ENCODE measurements at regions of chr5 and their contacts with region 1.

Region 1: GRCh38 chr5:76771705-76772405 is 47.0 kb upstream of the F2RL1 start:
- DNase-seq: no peak
- H3K4me3 Mint-ChIP-seq: no peak overlapping the region
- H3K27ac Mint-ChIP-seq: no peak overlapping the region
- H3K4me1 Mint-ChIP-seq: peaks cover 4% of the 10 kb centered on the region
- H3K27me3 Mint-ChIP-seq: peaks cover 9% of the 10 kb centered on the region

Region 2: DNA sequence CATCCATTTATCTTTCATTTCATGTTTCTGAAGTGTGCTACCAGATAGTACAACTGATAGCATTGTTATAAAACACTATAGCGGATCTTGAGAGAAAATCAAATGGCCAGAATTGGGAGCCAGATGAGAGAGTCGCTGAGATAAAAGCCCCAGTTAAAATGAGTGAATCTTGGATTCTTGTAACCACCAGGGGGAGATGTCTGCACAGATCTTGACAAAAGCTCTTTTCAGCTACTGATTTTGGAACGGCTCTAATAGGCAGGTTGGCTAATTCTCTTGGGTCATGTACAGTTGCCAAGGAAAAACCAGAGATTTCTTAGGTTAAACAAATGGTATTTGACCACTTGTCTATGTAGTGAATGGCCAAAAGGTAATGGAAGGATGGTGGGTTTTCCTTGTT is 170.4 kb before region 1 on chr5:
- CTCF ChIA-PET with region 1: interaction called, 75 read pairs
- DNase-seq: peak; percentile 24
- H3K4me3 Mint-ChIP-seq: no peak overlapping the region
- H3K27ac Mint-ChIP-seq: no peak overlapping the region
- H3K4me1 Mint-ChIP-seq: no peaks in the 10 kb centered on the region
- H3K27me3 Mint-ChIP-seq: no peaks in the 10 kb centered on the region

Region 3: DNA sequence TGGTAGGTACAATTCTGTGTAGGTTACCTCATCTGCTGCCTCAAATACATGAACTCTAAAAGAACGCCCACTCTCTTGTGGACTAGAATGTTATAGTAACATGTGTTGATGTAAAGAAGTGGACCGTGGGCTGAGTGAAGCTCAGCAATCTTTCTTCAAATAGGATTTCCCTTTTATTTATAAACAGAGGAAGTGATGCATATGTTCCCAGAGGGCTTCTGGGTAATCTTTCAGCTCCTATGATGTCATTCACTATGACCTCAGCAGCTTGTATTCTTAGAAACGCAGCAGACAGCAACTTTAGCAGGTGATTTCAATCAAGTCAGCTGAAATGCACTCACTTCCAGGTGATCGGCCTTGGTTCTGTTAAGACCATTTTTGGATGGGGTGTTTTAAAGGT is 163.0 kb before region 1 on chr5:
- CTCF ChIA-PET with region 1: interaction called, 15 read pairs
- DNase-seq: no peak
- H3K4me3 Mint-ChIP-seq: no peak overlapping the region
- H3K27ac Mint-ChIP-seq: peak overlapping the region; percentile 56
- H3K4me1 Mint-ChIP-seq: peaks cover 8% of the 10 kb centered on the region
- H3K27me3 Mint-ChIP-seq: no peaks in the 10 kb centered on the region

Region 4: DNA sequence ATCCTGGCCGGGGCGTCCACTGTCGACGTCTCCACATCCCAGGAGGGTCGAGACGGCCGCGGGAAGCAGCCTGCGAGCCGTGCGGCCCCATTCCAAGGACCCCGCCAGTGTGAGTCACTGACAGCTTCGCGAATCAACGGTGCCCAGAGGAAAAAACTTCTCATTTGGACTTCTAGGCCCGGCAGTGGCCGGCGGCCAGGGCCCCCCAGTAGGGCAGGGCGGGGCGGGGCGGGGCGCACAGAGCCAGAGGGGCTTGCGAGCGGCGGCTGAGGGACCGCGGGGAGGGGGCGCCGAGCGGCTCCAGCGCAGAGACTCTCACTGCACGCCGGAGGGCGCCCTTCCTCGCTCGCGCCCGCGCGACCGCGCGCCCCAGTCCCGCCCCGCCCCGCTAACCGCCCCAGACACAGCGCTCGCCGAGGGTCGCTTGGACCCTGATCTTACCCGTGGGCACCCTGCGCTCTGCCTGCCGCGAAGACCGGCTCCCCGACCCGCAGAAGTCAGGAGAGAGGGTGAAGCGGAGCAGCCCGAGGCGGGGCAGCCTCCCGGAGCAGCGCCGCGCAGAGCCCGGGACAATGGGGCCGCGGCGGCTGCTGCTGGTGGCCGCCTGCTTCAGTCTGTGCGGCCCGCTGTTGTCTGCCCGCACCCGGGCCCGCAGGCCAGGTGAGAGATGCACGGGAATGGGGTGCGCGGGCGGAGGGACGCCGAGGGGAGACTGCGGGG is 56.0 kb before region 1 on chr5 and contains the start of gene F2R:
- CTCF ChIA-PET with region 1: interaction called, 54 read pairs
- DNase-seq: peak; percentile 69
- H3K4me3 Mint-ChIP-seq: peak within 1 kb of the TSS; percentile 77
- H3K27ac Mint-ChIP-seq: peak within 1 kb of the TSS; percentile 65
- H3K4me1 Mint-ChIP-seq: peaks cover 44% of the 10 kb centered on the region
- H3K27me3 Mint-ChIP-seq: peaks cover 53% of the 10 kb centered on the region

Region 5: GRCh38 chr5:76736679-76737556 is 34.9 kb before region 1 on chr5:
- CTCF ChIA-PET with region 1: interaction called, 21 read pairs
- DNase-seq: no peak
- H3K4me3 Mint-ChIP-seq: no peak overlapping the region
- H3K27ac Mint-ChIP-seq: peak overlapping the region; percentile 57
- H3K4me1 Mint-ChIP-seq: peaks cover 53% of the 10 kb centered on the region
- H3K27me3 Mint-ChIP-seq: no peaks in the 10 kb centered on the region

Region 6: GRCh38 chr5:76790632-76791290 is 18.9 kb after region 1 on chr5:
- CTCF ChIA-PET with region 1: interaction called, 16 read pairs
- DNase-seq: no peak
- H3K4me3 Mint-ChIP-seq: no peak overlapping the region
- H3K27ac Mint-ChIP-seq: no peak overlapping the region
- H3K4me1 Mint-ChIP-seq: peaks cover 18% of the 10 kb centered on the region
- H3K27me3 Mint-ChIP-seq: no peaks in the 10 kb centered on the region

Region 7: GRCh38 chr5:76926329-76927105 is 154.7 kb after region 1 on chr5:
- CTCF ChIA-PET with region 1: no interaction called
- DNase-seq: no peak
- H3K4me3 Mint-ChIP-seq: no peak overlapping the region
- H3K27ac Mint-ChIP-seq: no peak overlapping the region
- H3K4me1 Mint-ChIP-seq: no peaks in the 10 kb centered on the region
- H3K27me3 Mint-ChIP-seq: peaks cover 18% of the 10 kb centered on the region

Region 8: DNA sequence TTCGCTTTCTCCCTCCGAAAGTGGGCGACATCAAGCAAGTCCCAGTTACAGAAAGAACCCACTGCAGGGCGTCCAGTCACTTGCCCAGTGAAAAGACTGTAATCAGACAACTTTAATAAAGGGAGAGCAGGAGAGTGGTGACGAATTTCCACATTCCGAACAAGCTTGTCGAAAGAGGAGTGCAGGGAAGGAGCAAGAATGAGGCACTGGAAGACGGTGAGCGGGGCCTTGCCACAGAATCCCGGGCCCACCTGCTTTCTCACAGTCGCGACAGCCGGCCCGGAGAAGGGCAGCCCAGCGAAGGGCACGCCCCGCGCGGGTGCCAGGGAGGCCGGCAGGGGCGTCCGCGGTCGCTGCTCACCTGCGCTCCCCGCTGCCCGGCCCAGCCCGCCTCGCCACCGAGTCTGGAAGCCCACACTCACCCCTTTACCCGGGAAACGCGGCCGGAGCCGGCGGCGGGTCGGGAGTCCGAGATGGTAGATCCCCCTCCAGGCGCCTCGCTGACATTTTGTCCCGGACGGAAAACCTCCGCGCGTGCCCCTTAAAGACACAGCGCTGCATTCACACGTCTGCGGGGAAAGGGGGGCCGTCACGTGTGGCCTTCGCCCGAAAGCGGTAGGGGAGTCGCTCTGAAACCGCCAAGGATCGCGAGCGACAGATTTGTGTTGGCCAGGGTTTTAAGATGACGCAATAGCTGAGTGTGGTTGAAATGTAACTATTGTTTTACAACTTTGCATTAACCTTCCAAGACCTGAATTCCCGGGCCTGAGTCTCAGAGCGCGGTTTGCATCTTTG is 315.0 kb after region 1 on chr5 and contains the start of gene ZBED3:
- CTCF ChIA-PET with region 1: no interaction called
- DNase-seq: peak; percentile 69
- H3K4me3 Mint-ChIP-seq: peak within 1 kb of the TSS; percentile 84
- H3K27ac Mint-ChIP-seq: peak within 1 kb of the TSS; percentile 20
- H3K4me1 Mint-ChIP-seq: peaks cover 13% of the 10 kb centered on the region
- H3K27me3 Mint-ChIP-seq: peaks cover 16% of the 10 kb centered on the region